WTC11 (cell line): ENCODE measurements at regions of chr5 and their contacts with region 1.

Region 1: DNA sequence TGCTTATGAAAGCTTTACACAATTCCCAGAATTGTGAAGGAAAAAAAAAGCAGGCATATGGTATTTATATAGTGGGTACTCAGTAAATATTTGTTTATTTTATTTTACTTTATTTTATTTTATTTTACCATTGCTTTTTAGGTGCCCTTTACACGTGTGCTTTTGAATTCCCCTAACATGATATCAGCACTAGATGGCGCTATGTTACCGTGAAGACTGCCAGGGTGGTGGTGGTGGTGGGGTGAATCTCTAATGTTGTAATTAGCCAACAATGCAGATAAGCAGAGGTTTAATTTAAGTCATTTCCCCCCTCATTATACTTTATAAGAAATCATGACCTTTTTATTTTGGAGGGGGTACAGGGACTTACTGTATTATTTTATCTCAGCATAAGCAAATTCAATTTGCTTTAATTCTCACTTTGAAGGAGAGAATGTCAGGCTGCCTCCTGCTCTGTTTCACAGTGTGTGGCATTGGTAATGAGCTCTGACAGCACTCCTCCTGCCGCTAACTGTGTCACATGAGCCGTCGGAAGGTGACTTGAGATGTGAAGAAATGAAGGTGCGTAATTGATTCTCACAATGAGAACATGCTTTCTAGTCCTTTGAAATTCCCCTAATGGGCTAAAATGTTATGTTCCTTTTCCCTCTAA is 165.6 kb downstream of the YTHDC2 start:
- DNase-seq: peak; percentile 38
- ATAC-seq: peak; percentile 79
- H3K4me3 Mint-ChIP-seq: no peak overlapping the region
- H3K27ac Mint-ChIP-seq: no peak overlapping the region
- H3K4me1 Mint-ChIP-seq: peaks cover 39% of the 10 kb centered on the region
- H3K27me3 Mint-ChIP-seq: no peaks in the 10 kb centered on the region
- CTCF ChIP-seq: peak; percentile 71

Region 2: DNA sequence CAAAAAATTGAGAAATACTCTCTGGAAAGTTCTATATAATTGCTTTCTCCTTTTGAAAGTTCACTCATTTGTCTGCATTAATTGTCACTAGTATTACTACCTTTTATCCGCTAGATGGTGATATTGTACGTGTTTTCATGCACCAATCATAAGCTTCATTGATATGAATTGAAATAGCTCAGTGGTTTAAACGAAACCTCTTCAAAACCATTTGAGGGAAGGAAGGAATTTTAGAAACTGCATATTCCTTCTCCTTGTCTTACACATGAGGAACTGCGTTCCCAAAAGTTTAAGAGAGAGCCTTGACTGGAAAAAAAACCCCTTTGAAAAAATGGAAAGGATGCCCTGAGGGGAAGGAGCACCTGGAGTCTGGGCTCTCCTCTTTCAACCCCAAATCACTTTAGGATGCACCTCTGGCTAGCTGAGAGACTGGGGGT is 67.0 kb before region 1 on chr5:
- CTCF ChIA-PET with region 1: interaction called, 32 read pairs
- POLR2A ChIA-PET with region 1: no interaction called
- DNase-seq: no peak
- ATAC-seq: peak; percentile 73
- H3K4me3 Mint-ChIP-seq: no peak overlapping the region
- H3K27ac Mint-ChIP-seq: no peak overlapping the region
- H3K4me1 Mint-ChIP-seq: peaks cover 23% of the 10 kb centered on the region
- H3K27me3 Mint-ChIP-seq: no peaks in the 10 kb centered on the region; the same call in 1 of the 2 replicates
- CTCF ChIP-seq: peak; percentile 53

Region 3: DNA sequence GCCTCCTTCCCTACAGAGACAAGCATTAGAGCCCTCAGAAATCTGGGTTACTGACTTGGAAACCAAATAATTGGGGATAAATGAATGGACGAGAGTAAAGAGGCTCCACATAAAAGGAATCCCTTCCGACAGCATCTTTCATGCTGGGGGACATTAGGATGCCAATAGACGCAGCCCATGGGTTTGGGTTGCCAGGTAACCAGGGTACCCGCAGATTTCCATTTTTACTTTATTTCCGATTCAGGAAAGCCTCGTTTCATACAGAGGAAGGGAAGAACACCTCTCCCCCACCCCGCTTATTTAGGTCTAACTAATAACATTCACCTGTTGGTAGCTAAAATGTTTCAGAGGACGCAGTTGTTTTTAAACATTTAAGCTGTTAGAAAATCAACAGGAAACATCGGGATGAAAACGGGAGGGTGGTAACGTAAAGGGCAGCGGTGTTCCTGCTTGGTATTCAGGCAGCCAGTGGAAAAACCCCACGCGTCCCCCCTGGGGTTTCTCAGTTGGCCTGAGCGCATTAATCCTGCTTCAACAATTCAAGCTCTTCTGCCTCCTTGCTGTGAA is 13.9 kb after region 1 on chr5:
- CTCF ChIA-PET with region 1: interaction called, 11 read pairs
- POLR2A ChIA-PET with region 1: no interaction called
- DNase-seq: peak; percentile 44
- ATAC-seq: peak; percentile 74
- H3K4me3 Mint-ChIP-seq: peak overlapping the region; percentile 52
- H3K27ac Mint-ChIP-seq: no peak overlapping the region
- H3K4me1 Mint-ChIP-seq: peaks cover 38% of the 10 kb centered on the region
- H3K27me3 Mint-ChIP-seq: no peaks in the 10 kb centered on the region
- CTCF ChIP-seq: no peak

Region 4: DNA sequence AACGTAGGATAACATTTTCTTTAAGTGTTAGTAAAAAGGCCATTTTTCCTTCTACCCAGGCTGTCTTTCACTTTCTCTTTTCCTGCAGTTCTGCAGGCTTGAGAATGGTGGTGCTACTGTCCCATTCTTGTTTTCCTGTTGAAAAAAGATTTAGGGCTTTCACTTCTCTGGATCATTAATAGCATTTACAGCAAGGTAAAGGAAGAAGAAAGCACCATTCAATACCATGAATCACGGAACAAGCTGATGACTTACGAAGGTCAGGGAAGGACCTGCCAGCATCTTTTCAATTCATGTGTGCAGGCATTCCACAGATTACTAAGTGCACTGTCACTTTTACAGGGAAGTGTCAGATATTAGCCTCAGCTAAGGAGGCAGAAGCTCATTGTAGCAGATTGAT is 127.2 kb after region 1 on chr5:
- CTCF ChIA-PET with region 1: interaction called, 17 read pairs
- POLR2A ChIA-PET with region 1: no interaction called
- DNase-seq: no peak
- ATAC-seq: peak; percentile 82
- H3K4me3 Mint-ChIP-seq: no peak overlapping the region
- H3K27ac Mint-ChIP-seq: no peak overlapping the region
- H3K4me1 Mint-ChIP-seq: peaks cover 9% of the 10 kb centered on the region
- H3K27me3 Mint-ChIP-seq: no peaks in the 10 kb centered on the region
- CTCF ChIP-seq: no peak

Region 5: DNA sequence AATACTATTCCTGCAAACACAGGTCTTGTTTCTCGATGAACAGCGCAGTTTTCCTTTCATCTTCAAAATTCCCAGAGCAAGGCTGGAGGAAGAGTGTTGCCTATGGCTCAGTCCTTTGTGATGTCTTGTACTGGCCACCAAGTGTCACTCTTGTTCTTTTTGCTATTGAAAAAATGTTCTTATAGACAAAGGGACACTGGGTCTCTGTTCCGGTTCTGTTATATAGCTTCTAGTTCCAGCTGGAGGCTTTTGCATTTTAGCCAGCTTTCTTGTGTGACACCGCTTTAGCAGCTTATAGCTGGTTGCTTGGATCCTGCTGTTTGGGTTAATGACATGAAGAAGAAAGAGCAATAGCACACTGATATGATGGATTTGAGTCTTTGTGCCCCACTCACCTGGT is 339.1 kb after region 1 on chr5:
- CTCF ChIA-PET with region 1: interaction called, 10 read pairs
- POLR2A ChIA-PET with region 1: no interaction called
- DNase-seq: no peak
- ATAC-seq: peak; percentile 90
- H3K4me3 Mint-ChIP-seq: no peak overlapping the region
- H3K27ac Mint-ChIP-seq: no peak overlapping the region
- H3K4me1 Mint-ChIP-seq: peaks cover 10% of the 10 kb centered on the region
- H3K27me3 Mint-ChIP-seq: no peaks in the 10 kb centered on the region
- CTCF ChIP-seq: no peak